ENCODE measurements at regions of chr12 and their contacts with region 1.

Region 1: GRCh38 chr12:111154147-111154834 is 214.6 kb downstream of the PHETA1 start:
- DNase-seq: no peak

Region 2: DNA sequence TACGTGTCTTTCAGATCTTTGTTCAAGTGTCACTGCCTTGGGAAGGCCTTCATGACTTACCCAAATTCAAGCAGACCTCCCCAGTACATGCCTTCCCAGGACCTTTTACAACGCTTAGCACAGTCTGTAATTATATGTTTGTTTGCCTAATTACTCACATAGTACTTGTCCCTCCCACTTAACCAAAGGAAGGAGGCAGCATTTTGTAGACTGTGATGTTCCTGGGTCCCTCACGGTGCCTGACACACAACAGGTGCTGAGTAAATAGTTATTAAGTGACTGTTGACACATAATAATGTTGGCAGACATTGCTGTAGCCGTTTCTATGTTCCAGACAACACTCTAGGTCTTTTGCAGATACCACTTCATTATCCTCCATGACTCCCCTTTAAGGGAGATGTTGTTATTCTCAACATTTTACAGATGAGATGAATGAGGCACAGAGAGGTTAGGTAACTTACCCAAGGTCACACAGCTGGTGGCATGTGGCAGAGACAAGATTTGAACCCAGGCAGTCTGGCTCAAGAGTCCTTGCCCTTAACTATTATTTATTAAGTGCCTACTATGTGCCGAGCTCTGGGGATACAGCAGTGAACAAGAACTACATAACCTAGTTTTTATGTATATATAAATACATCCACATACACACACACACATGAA is 83.9 kb after region 1 on chr12:
- intact Hi-C with region 1: no loop called
- DNase-seq: no peak

Region 3: DNA sequence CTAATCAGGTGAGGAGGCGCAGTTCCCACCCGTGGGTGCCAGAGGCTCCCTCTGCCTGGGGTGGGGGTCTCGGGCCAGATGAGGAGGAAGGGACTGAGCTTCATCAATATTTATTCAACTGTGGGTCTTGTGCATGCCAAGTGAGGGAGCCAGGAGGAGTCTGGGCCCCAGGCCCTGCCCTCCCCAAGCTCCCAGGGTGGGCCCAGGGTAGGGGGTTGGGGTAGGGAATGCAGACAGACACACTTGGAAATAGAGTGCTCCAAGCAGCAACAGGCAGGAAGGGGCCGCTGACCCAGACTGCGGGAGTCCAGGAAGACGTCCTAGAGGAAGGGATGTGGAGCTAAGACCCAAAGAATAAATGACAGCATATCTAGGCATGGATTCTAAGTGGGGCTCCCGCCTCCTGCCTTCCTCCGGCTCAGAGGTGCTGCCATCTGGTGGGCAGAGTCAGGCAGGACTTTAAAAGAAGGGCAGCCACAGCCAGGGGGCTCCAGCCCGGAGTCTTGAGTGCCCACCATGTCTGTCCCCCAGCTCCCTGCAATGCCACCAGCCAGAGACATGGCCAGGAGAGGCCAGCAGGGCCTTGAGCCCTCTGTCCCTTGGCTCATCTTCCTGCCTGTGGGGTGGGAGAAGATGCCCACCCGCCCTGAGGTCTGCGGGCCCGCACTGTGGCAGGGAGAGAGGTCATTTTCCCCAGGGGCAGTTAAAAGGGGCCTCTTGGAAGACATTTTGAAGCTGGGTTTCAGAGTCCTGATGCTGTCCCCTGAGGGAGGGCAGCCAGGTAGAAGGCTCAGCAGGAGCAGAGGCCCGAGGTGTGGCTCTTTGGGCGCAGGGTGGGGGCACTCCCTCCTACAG is 144.5 kb after region 1 on chr12:
- intact Hi-C with region 1: loop called (anchors 10 kb)
- DNase-seq: peak; percentile 16 to 82 (median 60)